ENCODE measurements at regions of chr4 and their contacts with region 1.

Region 1: DNA sequence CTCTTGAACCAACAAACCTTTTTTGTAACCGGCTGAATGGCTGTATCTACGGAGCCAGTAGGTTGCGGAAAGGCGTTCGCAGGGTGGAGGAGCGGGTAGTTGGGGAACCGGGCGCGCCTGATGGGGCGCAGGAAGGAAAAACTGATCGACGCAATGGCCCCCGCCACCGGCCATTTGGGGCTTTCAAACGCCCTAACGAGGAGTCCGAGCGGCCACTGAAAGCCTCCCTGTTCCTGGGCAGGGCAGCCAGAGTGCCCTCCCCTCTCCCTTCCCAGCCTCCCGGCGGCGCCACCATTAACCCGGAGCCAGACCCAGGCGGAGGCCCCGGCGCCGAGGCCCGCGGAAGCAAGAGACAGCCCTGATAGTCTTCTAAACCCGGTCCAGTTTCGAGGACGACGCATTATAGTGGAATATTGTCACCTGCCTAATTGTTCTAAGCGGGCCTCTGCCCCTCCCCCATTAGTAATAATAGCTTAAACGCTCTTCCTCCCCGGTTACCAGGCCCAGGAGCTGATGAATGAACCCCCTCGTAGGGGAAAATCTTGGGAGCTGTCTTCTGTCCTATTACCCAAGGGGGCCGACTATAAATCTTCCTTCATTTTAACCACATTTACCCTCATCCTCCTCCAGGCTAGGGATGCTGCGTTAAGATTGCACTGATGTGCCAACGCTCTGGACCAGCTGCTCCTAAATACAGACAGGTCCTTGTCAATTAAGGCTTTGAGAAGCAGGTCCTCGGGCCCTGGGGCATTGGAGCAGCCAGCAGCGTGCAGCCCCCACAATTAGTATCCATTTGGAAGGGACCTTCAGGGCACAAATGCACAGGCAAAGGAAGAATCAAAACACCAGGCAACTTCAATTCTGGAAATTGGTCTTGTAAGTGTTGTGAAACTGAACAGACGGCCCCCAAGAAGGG is 61.6 kb upstream of the TMEM33 start:
- DNase-seq: no peak
- ATAC-seq: no peak
- H3K4me3 ChIP-seq: no peak overlapping the region
- H3K4me3 Mint-ChIP-seq: no peak overlapping the region
- H3K27ac ChIP-seq: no peak overlapping the region
- H3K27ac Mint-ChIP-seq: no peak overlapping the region
- H3K4me1 ChIP-seq: peaks cover 0 to 8% of the 10 kb centered on the region in 2 donors
- H3K4me1 Mint-ChIP-seq: no peaks in the 10 kb centered on the region
- H3K27me3 ChIP-seq: peaks cover 0 to 49% (median 44%) of the 10 kb centered on the region in 4 experiments
- H3K27me3 Mint-ChIP-seq: peaks cover 84% of the 10 kb centered on the region
- CTCF ChIP-seq: no peak

Region 2: DNA sequence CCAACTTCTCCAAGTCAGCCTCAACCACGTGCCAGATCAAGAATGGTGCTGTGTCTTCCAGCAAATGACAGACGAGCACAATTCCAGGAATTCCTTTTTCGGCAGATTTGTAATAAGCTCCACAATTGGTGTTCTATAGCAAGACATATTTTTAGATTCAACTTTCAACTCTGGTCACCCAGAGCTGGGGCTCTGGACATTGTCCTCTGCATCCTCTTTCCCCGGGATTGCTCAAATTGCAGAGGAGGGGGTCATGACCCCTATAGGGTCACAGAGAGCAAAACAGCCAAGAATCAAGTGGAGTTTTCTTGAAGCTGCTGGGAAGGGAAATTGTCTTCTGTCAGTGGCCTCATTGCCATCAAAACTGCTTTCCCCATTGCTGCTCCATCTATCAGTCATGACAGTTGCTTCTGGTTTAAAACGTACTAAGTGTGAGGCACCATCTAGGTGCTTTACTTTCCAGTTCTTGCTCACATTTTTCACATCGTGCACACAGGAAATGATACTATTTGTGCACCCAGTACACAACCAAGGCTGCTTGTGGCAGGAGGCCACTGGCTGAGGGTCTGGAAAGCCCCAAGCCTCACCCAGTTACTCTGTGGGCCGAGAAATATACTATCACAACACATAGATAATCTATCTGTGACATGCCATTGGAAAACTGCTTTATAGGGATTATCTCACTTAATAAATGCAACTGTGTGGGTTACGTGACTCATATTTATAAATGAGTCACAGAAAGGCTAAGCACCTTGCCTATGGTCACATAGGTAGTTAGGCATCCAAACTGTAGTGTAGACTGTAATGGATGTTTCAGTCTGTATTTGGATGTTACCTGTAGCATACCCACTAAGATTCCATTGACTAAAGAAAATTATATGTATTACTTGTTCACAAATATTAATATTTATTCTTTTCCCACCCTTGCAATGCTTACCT is 33.5 kb before region 1 on chr4:
- CTCF ChIA-PET with region 1: no interaction called
- POLR2A ChIA-PET with region 1: no interaction called
- intact Hi-C with region 1: no loop called
- DNase-seq: no peak
- ATAC-seq: no peak
- H3K4me3 ChIP-seq: no peak overlapping the region
- H3K4me3 Mint-ChIP-seq: no peak overlapping the region
- H3K27ac ChIP-seq: no peak overlapping the region
- H3K27ac Mint-ChIP-seq: no peak overlapping the region
- H3K4me1 ChIP-seq: no peaks in the 10 kb centered on the region
- H3K4me1 Mint-ChIP-seq: no peaks in the 10 kb centered on the region
- H3K27me3 ChIP-seq: peaks cover 0 to 6% (median 1%) of the 10 kb centered on the region in 4 experiments
- H3K27me3 Mint-ChIP-seq: peaks cover 19% of the 10 kb centered on the region
- CTCF ChIP-seq: no peak

Region 3: DNA sequence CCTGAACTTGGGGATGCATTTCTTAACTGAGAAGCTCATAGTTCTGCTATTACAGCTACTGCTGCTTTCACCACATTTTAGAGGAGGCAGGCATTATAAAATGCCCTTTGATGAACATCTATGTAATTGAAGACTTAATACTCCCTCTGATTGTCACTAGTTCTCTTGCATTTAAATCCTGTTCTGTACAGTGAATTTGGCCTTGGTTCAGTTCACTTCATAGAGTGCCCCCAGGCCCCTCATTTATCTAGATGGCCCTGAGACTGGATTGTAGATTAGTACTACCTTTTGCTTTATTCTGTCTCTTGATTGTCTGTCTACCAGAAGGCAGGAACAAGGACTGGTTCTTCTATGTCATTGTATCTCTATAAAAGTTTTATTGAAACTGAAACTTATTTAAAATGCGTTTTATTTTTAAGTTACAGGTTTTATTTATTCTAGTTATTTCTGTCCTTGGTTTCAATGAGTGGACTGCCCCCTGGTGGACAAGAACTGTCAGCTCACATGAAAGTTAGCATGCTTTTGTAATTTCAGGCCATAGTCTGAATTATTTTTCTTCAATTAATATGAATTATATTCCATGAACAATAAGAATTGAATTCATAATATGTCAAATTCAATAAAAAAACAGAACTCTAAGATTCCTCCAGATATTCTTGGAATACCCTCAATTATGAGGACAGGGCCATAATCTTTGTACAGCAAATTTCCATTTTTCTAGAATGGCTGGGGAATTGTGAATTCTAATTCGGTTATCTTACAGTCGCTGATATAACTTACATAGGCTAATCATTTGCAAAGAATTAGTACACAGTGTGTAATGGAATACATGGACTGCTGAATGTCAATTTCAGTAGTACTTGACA is 14.4 kb after region 1 on chr4:
- CTCF ChIA-PET with region 1: interaction called, 30 read pairs
- POLR2A ChIA-PET with region 1: no interaction called
- intact Hi-C with region 1: no loop called
- DNase-seq: peak; percentile 56
- ATAC-seq: no peak
- H3K4me3 ChIP-seq: no peak overlapping the region
- H3K4me3 Mint-ChIP-seq: no peak overlapping the region
- H3K27ac ChIP-seq: no peak overlapping the region
- H3K27ac Mint-ChIP-seq: no peak overlapping the region
- H3K4me1 ChIP-seq: no peaks in the 10 kb centered on the region
- H3K4me1 Mint-ChIP-seq: no peaks in the 10 kb centered on the region
- H3K27me3 ChIP-seq: peaks cover 0 to 6% (median 0%) of the 10 kb centered on the region in 4 experiments
- H3K27me3 Mint-ChIP-seq: peaks cover 55% of the 10 kb centered on the region
- CTCF ChIP-seq: peak; percentile 93

Measured in B cell (primary cell).